ENCODE measurements at regions of chr10 and their contacts with region 1.

Region 1: GRCh38 chr10:102009801-102010425 is 46.1 kb downstream of the ARMH3 start:
- DNase-seq: peak; percentile 56
- ATAC-seq: peak; percentile 88
- H3K4me3 Mint-ChIP-seq: no peak overlapping the region
- H3K27ac Mint-ChIP-seq: no peak overlapping the region
- H3K4me1 Mint-ChIP-seq: no peaks in the 10 kb centered on the region
- H3K27me3 Mint-ChIP-seq: no peaks in the 10 kb centered on the region

Region 2: DNA sequence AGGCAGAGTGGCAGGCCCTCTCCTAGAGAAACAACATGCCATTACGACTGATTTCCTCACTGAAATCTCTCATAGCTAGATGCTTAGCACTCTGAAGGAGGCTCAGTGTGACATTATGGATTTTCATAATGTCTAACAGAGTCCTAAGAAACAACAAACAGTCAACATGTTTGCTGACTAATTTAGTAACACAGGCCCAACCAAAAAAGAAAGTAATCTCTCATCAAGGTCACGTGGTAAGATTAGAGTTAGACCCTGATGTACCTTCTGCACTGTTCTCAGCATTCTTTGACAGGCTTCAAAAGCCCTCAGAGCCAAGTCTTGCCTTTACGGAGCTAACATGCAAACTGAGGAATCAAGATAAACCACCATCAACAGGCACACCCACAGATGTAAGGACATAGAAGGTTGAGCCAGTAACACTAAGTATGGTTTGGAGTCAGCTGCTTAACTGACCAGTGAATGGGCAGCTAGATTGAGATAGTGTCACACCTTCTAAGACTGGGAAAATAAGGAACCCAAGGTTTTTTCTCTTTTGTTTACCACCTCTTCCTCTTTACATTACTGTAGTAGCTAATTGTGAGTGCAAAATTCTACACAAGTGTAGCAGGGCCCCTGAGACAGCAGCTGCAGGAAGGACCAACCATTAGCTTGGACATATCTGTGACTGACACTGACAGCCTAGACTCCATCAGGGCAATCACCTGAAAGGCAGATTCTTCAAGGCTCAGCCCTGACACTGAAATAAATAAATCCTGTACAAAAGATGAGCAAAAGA is 151.0 kb before region 1 on chr10:
- CTCF ChIA-PET with region 1: interaction called, 40 read pairs
- POLR2A ChIA-PET with region 1: no interaction called
- DNase-seq: no peak
- ATAC-seq: peak; percentile 42
- H3K4me3 Mint-ChIP-seq: no peak overlapping the region
- H3K27ac Mint-ChIP-seq: no peak overlapping the region
- H3K4me1 Mint-ChIP-seq: peaks cover 6% of the 10 kb centered on the region
- H3K27me3 Mint-ChIP-seq: no peaks in the 10 kb centered on the region

Region 3: DNA sequence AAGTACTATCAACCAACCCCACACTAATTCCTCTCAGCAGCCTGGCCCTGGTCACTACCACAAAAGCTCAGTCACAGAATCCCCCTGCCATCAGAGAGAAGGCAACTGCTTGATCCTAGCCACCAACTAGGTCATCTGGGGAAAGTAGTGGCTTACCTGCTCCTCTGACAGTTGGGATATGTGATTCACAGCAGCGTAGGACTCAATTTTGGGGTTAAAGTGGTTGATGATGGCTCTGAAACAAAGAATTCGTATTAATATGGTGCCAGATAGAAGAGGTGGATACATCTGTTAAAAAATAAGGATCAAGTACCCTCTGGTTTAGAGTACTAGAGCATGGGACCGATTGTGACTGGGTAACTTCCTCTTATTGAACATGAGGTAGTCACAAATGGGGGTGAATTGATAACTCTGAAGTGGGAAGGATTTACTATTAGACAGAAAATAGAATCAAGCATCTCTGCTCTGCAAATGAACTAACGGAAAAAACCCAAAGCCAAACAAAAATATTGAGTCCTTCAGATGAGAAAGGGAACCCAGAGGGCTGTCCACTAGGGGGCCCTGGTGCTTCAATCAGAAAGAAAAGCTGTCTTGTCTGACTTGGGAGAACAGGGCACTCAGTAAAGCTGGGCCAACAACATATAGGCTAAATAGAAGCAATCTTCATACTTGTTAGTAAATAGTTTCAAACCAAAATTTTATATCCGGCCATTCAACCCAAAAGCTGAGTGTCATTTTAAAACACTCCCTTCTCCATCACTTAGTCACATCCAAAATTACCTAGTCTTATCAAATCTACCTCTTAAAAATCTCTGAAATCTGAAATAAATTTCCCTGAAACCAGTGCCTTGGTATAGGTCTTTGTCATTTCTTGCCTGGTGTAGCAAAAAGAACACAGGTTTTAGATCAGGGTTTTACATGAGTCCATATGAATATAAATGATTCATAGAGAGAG is 120.4 kb before region 1 on chr10:
- CTCF ChIA-PET with region 1: interaction called, 121 read pairs
- POLR2A ChIA-PET with region 1: no interaction called
- DNase-seq: peak; percentile 82
- ATAC-seq: peak; percentile 58
- H3K4me3 Mint-ChIP-seq: no peak overlapping the region
- H3K27ac Mint-ChIP-seq: no peak overlapping the region
- H3K4me1 Mint-ChIP-seq: no peaks in the 10 kb centered on the region
- H3K27me3 Mint-ChIP-seq: no peaks in the 10 kb centered on the region

Region 4: DNA sequence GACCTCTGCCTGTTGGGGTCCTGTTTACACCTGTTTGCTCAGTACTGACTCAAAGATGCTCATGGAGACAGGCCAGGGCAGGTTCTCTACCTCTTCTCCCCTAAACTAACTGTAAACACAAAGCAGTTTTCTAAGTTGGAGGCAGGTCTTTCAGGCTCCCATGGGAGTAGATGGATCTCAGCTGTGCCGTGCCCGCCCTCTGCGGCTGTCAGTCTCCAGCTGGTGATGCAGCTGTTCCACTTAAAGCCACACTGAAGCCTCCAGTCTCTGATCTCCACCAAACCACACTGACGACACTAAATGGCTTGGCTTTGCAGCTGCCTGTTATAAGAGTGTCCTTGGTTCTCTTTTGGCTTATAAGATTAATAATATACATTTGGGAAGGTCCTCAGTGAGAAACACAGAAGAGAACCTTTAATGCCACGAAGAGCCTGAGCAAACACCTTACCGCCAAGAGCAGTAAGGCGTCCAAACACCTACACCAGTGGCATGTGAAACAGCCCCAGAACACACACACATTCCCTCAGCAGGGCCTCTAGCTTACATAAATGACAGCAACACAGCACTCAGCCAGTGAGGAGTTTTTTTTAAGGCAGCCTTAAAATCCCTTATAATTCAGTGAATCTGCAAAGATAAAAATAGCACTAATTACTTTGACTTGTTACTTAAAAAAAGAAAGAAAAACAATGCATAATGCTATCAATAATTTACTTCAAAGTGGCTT is 105.9 kb before region 1 on chr10:
- CTCF ChIA-PET with region 1: interaction called, 15 read pairs
- POLR2A ChIA-PET with region 1: no interaction called
- DNase-seq: peak; percentile 42
- ATAC-seq: peak; percentile 87
- H3K4me3 Mint-ChIP-seq: no peak overlapping the region
- H3K27ac Mint-ChIP-seq: no peak overlapping the region
- H3K4me1 Mint-ChIP-seq: peaks cover 8% of the 10 kb centered on the region
- H3K27me3 Mint-ChIP-seq: no peaks in the 10 kb centered on the region

Region 5: GRCh38 chr10:101995451-101996063 is 14.4 kb before region 1 on chr10:
- CTCF ChIA-PET with region 1: interaction called, 17 read pairs
- POLR2A ChIA-PET with region 1: no interaction called
- DNase-seq: no peak
- ATAC-seq: no peak
- H3K4me3 Mint-ChIP-seq: no peak overlapping the region
- H3K27ac Mint-ChIP-seq: no peak overlapping the region
- H3K4me1 Mint-ChIP-seq: no peaks in the 10 kb centered on the region
- H3K27me3 Mint-ChIP-seq: no peaks in the 10 kb centered on the region

Region 6: DNA sequence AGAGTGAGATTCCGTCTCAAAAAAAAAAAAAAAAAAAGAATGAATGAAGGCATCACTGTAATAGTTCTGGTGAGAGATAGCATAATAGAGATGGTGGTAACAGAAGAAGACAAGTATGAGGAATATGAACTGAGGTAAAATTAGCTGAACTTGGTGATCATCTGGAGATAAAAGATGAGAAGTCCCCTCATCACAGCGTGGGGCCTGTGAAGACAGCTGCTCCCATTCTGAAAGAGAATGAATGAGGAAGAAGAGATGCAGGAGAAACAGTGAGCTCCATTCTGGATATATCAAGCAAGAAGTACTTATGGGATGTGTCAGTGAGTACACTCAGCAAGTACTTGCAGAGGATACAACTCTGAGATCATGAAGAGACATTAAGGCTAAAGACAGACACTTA is 17.3 kb after region 1 on chr10:
- CTCF ChIA-PET with region 1: interaction called, 22 read pairs
- POLR2A ChIA-PET with region 1: no interaction called
- DNase-seq: no peak
- ATAC-seq: no peak
- H3K4me3 Mint-ChIP-seq: no peak overlapping the region
- H3K27ac Mint-ChIP-seq: no peak overlapping the region
- H3K4me1 Mint-ChIP-seq: no peaks in the 10 kb centered on the region
- H3K27me3 Mint-ChIP-seq: no peaks in the 10 kb centered on the region

Region 7: DNA sequence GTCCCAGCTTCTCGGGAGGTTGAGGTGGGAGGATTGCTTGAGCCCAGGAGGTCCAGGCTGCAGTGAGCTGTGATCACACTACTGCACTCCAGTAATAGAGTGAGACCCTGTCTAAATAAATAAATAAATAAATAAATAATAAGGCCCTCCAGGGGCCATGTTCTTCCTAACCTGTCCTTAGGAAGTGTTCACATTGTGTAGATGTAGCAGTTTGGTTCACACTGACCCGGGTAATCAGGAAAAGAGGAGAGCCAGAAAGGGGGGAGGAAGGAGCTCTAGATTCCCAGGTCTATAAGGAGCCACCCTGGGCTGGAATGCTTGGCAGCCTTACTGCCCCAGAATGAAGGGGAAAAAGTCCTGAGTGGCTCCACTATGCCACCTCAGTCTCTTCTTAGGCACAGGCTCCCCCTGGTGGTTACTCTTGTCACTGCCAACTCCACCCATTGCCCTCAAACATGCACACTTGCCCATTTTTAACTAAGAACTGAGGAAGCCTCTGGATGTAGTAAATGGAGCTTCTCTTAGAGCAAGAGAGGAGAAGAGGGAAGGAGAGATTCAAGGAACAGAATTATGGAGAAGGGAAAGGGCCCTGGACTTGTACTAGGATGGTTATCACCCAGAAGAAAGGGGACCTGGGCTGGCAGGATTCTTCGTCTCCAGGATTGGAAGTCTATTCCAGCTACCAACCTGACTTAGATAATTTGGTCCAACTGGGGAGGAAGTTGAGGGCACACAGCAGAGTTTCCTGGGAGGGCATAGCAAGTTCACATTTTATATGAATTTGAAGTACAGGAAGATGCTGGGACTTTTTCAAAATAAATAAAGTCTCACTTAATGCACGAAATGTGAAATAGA is 63.0 kb after region 1 on chr10:
- CTCF ChIA-PET with region 1: interaction called, 42 read pairs
- POLR2A ChIA-PET with region 1: no interaction called
- DNase-seq: peak; percentile 87
- ATAC-seq: peak; percentile 95
- H3K4me3 Mint-ChIP-seq: no peak overlapping the region
- H3K27ac Mint-ChIP-seq: no peak overlapping the region
- H3K4me1 Mint-ChIP-seq: peaks cover under 1% of the 10 kb centered on the region
- H3K27me3 Mint-ChIP-seq: no peaks in the 10 kb centered on the region

Region 8: GRCh38 chr10:102120142-102120990 is 110.5 kb after region 1 on chr10 and contains the start of gene LDB1:
- CTCF ChIA-PET with region 1: no interaction called
- POLR2A ChIA-PET with region 1: no interaction called
- DNase-seq: peak; percentile 78
- ATAC-seq: peak; percentile 56
- H3K4me3 Mint-ChIP-seq: peak within 1 kb of the TSS; percentile 85
- H3K27ac Mint-ChIP-seq: peak within 1 kb of the TSS; percentile 93
- H3K4me1 Mint-ChIP-seq: peaks cover 55% of the 10 kb centered on the region
- H3K27me3 Mint-ChIP-seq: no peaks in the 10 kb centered on the region
- total RNA-seq, gene LDB1: 83.6 to 87.1 TPM

Region 9: GRCh38 chr10:102151774-102152544 is 142.0 kb after region 1 on chr10 and contains the start of gene NOLC1:
- CTCF ChIA-PET with region 1: no interaction called
- POLR2A ChIA-PET with region 1: no interaction called
- DNase-seq: peak; percentile 100
- ATAC-seq: peak; percentile 95
- H3K4me3 Mint-ChIP-seq: peak within 1 kb of the TSS; percentile 98
- H3K27ac Mint-ChIP-seq: peak within 1 kb of the TSS; percentile 98
- H3K4me1 Mint-ChIP-seq: peaks cover 46% of the 10 kb centered on the region
- H3K27me3 Mint-ChIP-seq: no peaks in the 10 kb centered on the region
- total RNA-seq, gene NOLC1: 94.1 to 95.3 TPM

Measured in activated CD8-positive, alpha-beta T cell treated with anti-CD3 and anti-CD28 coated beads, Interleukin-2, amount 10 ng/mL, durations not matched to agents 7 days and 5 days (primary cell).